ENCODE measurements at regions of chr3 and their contacts with region 1.

Region 1: GRCh38 chr3:32947789-32948238 is 3.6 kb upstream of the CCR4 start:
- DNase-seq: peak; percentile 71 to 87 (median 82)
- ATAC-seq: peak; percentile 90
- H3K4me3 ChIP-seq: no peak overlapping the region
- H3K4me3 Mint-ChIP-seq: no peak overlapping the region
- H3K27ac ChIP-seq: no peak overlapping the region
- H3K27ac Mint-ChIP-seq: peak overlapping the region in 1 of 9 donors; percentile 74
- H3K4me1 ChIP-seq: peaks cover 9 to 13% of the 10 kb centered on the region in 2 donors
- H3K4me1 Mint-ChIP-seq: peaks cover 8 to 45% (median 24%) of the 10 kb centered on the region in 7 donors
- H3K27me3 ChIP-seq: no peaks in the 10 kb centered on the region
- H3K27me3 Mint-ChIP-seq: peaks cover 0 to 4% (median 0%) of the 10 kb centered on the region in 5 donors

Region 2: GRCh38 chr3:32960404-32961170 is 12.8 kb after region 1 on chr3:
- CTCF ChIA-PET with region 1: interaction called, 3 read pairs
- POLR2A ChIA-PET with region 1: no interaction called
- intact Hi-C with region 1: loop called in 1 of 2 experiments (anchors 1 kb)
- DNase-seq: no peak
- ATAC-seq: no peak
- H3K4me3 ChIP-seq: no peak overlapping the region
- H3K4me3 Mint-ChIP-seq: peak overlapping the region in 4 of 10 donors; percentile 7 to 62 (median 36)
- H3K27ac ChIP-seq: no peak overlapping the region
- H3K27ac Mint-ChIP-seq: peak overlapping the region in 7 of 9 donors; percentile 31 to 92 (median 81)
- H3K4me1 ChIP-seq: peaks cover 11 to 21% of the 10 kb centered on the region in 2 donors
- H3K4me1 Mint-ChIP-seq: peaks cover 11 to 44% (median 22%) of the 10 kb centered on the region in 7 donors
- H3K27me3 ChIP-seq: no peaks in the 10 kb centered on the region
- H3K27me3 Mint-ChIP-seq: peaks cover 0 to 3% (median 0%) of the 10 kb centered on the region in 5 donors

Region 3: DNA sequence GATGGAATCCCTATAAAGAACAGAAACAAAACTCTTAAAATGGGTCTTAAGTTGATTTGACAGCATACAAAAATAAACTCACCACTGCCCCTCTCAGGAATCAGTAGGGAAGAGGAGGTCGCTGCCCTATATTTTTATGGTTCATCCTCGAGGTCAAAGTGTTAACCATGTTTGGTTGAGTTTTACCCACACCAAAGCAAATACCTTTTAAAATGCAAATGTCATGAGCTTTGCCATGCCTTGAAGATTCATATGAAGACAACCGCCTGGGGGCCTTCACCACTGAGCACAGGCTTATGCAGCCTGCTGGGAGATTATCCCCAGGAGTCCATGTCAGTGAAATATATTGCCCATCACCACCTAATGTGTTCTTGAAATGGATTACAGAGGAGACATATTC is 83.0 kb after region 1 on chr3:
- CTCF ChIA-PET with region 1: interaction called, 3 read pairs
- POLR2A ChIA-PET with region 1: no interaction called
- intact Hi-C with region 1: loop called in 1 of 2 experiments (anchors 1 kb)
- DNase-seq: no peak
- ATAC-seq: peak; percentile 65
- H3K4me3 ChIP-seq: no peak overlapping the region
- H3K4me3 Mint-ChIP-seq: peak overlapping the region in 1 of 10 donors; percentile 12
- H3K27ac ChIP-seq: no peak overlapping the region
- H3K27ac Mint-ChIP-seq: peak overlapping the region in 2 of 9 donors; percentile 24 to 32
- H3K4me1 ChIP-seq: peaks cover 0 to 11% of the 10 kb centered on the region in 2 donors
- H3K4me1 Mint-ChIP-seq: peaks cover 0 to 27% (median 7%) of the 10 kb centered on the region in 7 donors
- H3K27me3 ChIP-seq: no peaks in the 10 kb centered on the region
- H3K27me3 Mint-ChIP-seq: no peaks in the 10 kb centered on the region

Region 4: GRCh38 chr3:33074217-33075067 is 126.6 kb after region 1 on chr3:
- CTCF ChIA-PET with region 1: interaction called, 141 read pairs
- POLR2A ChIA-PET with region 1: interaction called, 5 read pairs
- intact Hi-C with region 1: loop called (anchors 1 kb)
- DNase-seq: peak; percentile 24 to 67 (median 59)
- ATAC-seq: peak; percentile 88
- H3K4me3 ChIP-seq: no peak overlapping the region
- H3K4me3 Mint-ChIP-seq: peak overlapping the region in 1 of 10 donors; percentile 39
- H3K27ac ChIP-seq: no peak overlapping the region
- H3K27ac Mint-ChIP-seq: no peak overlapping the region
- H3K4me1 ChIP-seq: peaks cover 0 to 4% of the 10 kb centered on the region in 2 donors
- H3K4me1 Mint-ChIP-seq: peaks cover 11 to 39% (median 25%) of the 10 kb centered on the region in 7 donors
- H3K27me3 ChIP-seq: no peaks in the 10 kb centered on the region
- H3K27me3 Mint-ChIP-seq: no peaks in the 10 kb centered on the region

Region 5: DNA sequence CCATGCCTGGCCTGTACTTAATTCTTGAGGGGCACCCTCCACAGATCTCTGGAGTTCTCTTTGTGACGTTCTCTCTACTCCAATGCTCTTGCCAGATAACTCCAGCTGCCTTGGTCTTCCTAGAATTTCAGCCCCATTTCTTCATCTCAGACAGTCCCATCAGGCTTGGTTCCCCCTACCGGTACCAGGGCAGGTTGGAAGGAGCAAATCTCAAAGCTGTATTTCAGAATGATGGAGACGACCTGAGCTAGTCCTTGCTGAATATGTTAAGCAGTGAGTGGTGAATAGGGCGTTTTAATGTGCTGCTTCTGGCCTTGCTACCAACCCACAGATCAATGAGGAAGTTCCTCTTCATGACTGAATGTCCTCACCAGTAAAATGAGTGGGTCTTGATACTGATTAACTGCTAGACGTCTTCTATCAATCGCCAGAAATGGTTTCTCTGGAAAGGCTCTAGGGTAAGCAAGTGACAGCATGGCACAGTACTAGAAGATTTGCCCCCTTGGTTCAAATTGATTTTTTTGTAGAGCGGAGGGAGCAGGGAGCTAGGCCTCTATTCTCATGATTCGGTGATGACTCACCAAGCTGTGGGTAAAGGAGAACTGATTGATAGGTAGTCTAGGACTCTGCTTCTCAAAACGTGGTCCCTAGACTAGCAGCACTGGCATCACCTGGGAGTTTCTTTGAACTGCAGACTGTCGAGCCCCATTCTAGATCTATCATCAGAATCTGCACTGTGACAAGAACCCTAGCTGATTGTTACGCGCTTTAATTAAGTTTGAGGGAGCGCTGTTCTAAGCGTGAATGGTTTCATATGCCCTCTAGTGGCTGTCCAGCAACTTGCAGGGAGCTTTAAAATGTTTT is 424.6 kb after region 1 on chr3:
- CTCF ChIA-PET with region 1: interaction called, 21 read pairs
- POLR2A ChIA-PET with region 1: no interaction called
- intact Hi-C with region 1: no loop called
- DNase-seq: peak in 8 of 9 donors; percentile 14 to 57 (median 38)
- ATAC-seq: peak; percentile 80
- H3K4me3 ChIP-seq: no peak overlapping the region
- H3K4me3 Mint-ChIP-seq: no peak overlapping the region
- H3K27ac ChIP-seq: no peak overlapping the region
- H3K27ac Mint-ChIP-seq: no peak overlapping the region
- H3K4me1 ChIP-seq: peaks cover 0 to 4% of the 10 kb centered on the region in 2 donors
- H3K4me1 Mint-ChIP-seq: peaks cover 2 to 8% (median 6%) of the 10 kb centered on the region in 7 donors
- H3K27me3 ChIP-seq: peaks cover 0 to 6% of the 10 kb centered on the region in 2 donors
- H3K27me3 Mint-ChIP-seq: peaks cover 12 to 32% (median 22%) of the 10 kb centered on the region in 5 donors

Region 6: GRCh38 chr3:33773637-33774036 is 825.8 kb after region 1 on chr3:
- CTCF ChIA-PET with region 1: no interaction called
- POLR2A ChIA-PET with region 1: no interaction called
- intact Hi-C with region 1: loop called in 1 of 2 experiments (anchors 1 kb)
- DNase-seq: no peak
- ATAC-seq: no peak
- H3K4me3 ChIP-seq: no peak overlapping the region
- H3K4me3 Mint-ChIP-seq: no peak overlapping the region
- H3K27ac ChIP-seq: no peak overlapping the region
- H3K27ac Mint-ChIP-seq: peak overlapping the region in 1 of 9 donors; percentile 53
- H3K4me1 ChIP-seq: no peaks in the 10 kb centered on the region
- H3K4me1 Mint-ChIP-seq: no peaks in the 10 kb centered on the region
- H3K27me3 ChIP-seq: no peaks in the 10 kb centered on the region
- H3K27me3 Mint-ChIP-seq: peaks cover 0 to 12% (median 0%) of the 10 kb centered on the region in 5 donors

Measured in naive thymus-derived CD4-positive, alpha-beta T cell (primary cell).